CD8-positive, alpha-beta memory T cell (primary cell): ENCODE measurements at regions of chr6 and their contacts with region 1.

Region 1: GRCh38 chr6:26196846-26197648 is 109.8 kb downstream of the HFE start:
- DNase-seq: peak; percentile 66 to 93 (median 90)
- H3K4me3 ChIP-seq: peak overlapping the region; percentile 84
- H3K4me3 Mint-ChIP-seq: peak overlapping the region; percentile 95 to 99 (median 96)
- H3K27ac ChIP-seq: peak overlapping the region; percentile 95
- H3K27ac Mint-ChIP-seq: peak overlapping the region; percentile 95 to 100 (median 98)
- H3K4me1 ChIP-seq: peaks cover 17% of the 10 kb centered on the region
- H3K4me1 Mint-ChIP-seq: peaks cover 33 to 63% (median 59%) of the 10 kb centered on the region in 3 donors
- H3K27me3 ChIP-seq: no peaks in the 10 kb centered on the region
- H3K27me3 Mint-ChIP-seq: peaks cover 0 to 4% of the 10 kb centered on the region in 2 donors

Region 2: GRCh38 chr6:26025894-26026832 is 170.9 kb before region 1 on chr6:
- CTCF ChIA-PET with region 1: interaction called, 4 read pairs
- POLR2A ChIA-PET with region 1: interaction called, 10 read pairs
- DNase-seq: peak; percentile 86 to 95 (median 94)
- H3K4me3 ChIP-seq: peak overlapping the region; percentile 59
- H3K4me3 Mint-ChIP-seq: peak overlapping the region; percentile 85 to 95 (median 93)
- H3K27ac ChIP-seq: peak overlapping the region; percentile 86
- H3K27ac Mint-ChIP-seq: peak overlapping the region; percentile 93 to 100 (median 98)
- H3K4me1 ChIP-seq: peaks cover 21% of the 10 kb centered on the region
- H3K4me1 Mint-ChIP-seq: peaks cover 30 to 77% (median 55%) of the 10 kb centered on the region in 3 donors
- H3K27me3 ChIP-seq: no peaks in the 10 kb centered on the region
- H3K27me3 Mint-ChIP-seq: peaks cover 0 to 9% of the 10 kb centered on the region in 2 donors

Region 3: GRCh38 chr6:26103770-26104456 is 93.1 kb before region 1 on chr6:
- CTCF ChIA-PET with region 1: interaction called, 3 read pairs
- POLR2A ChIA-PET with region 1: interaction called, 32 read pairs
- DNase-seq: peak; percentile 75 to 96 (median 93)
- H3K4me3 ChIP-seq: peak overlapping the region; percentile 51
- H3K4me3 Mint-ChIP-seq: peak overlapping the region; percentile 83 to 92 (median 87)
- H3K27ac ChIP-seq: peak overlapping the region; percentile 82
- H3K27ac Mint-ChIP-seq: peak overlapping the region; percentile 96 to 98 (median 97)
- H3K4me1 ChIP-seq: peaks cover 18% of the 10 kb centered on the region
- H3K4me1 Mint-ChIP-seq: peaks cover 16 to 20% (median 17%) of the 10 kb centered on the region in 3 donors
- H3K27me3 ChIP-seq: no peaks in the 10 kb centered on the region
- H3K27me3 Mint-ChIP-seq: peaks cover 0 to 4% of the 10 kb centered on the region in 2 donors

Region 4: GRCh38 chr6:26223650-26224546 is 26.9 kb after region 1 on chr6:
- CTCF ChIA-PET with region 1: interaction called, 3 read pairs
- POLR2A ChIA-PET with region 1: interaction called, 35 read pairs
- DNase-seq: peak; percentile 57 to 83 (median 78)
- H3K4me3 ChIP-seq: peak overlapping the region; percentile 87
- H3K4me3 Mint-ChIP-seq: no peak overlapping the region
- H3K27ac ChIP-seq: peak overlapping the region; percentile 72
- H3K27ac Mint-ChIP-seq: no peak overlapping the region
- H3K4me1 ChIP-seq: peaks cover 17% of the 10 kb centered on the region
- H3K4me1 Mint-ChIP-seq: peaks cover under 1 to 7% (median 7%) of the 10 kb centered on the region in 3 donors
- H3K27me3 ChIP-seq: no peaks in the 10 kb centered on the region
- H3K27me3 Mint-ChIP-seq: no peaks in the 10 kb centered on the region

Region 5: DNA sequence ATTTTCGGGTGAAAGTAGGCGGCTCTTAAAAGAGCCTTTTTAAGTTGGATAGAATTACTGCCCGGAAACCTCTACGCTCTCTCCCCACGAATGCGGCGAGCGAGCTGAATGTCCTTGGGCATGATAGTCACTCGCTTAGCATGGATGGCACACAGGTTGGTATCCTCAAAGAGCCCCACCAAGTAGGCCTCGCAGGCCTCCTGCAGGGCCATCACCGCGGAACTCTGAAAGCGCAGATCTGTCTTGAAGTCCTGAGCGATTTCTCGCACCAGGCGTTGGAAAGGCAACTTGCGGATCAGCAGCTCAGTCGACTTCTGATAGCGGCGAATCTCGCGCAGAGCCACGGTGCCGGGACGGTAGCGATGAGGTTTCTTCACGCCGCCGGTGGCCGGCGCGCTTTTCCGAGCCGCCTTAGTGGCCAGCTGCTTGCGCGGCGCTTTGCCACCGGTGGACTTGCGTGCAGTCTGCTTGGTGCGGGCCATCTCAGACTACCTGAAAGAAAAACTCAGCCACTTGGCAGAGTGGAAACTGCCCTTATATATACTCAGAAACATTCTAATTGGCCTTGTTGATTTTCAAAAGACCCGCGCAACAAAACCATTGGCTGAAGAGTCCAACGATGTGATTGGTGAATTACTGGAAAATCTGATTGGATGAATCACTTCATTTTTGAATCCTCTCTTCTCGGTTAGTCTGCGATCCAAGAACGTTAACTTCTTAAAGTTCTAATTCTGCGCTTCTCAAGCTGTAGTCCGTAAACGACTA is 74.0 kb after region 1 on chr6:
- CTCF ChIA-PET with region 1: interaction called, 46 read pairs
- POLR2A ChIA-PET with region 1: interaction called, 173 read pairs
- DNase-seq: peak; percentile 61 to 84 (median 82)
- H3K4me3 ChIP-seq: peak overlapping the region; percentile 70
- H3K4me3 Mint-ChIP-seq: no peak overlapping the region
- H3K27ac ChIP-seq: peak overlapping the region; percentile 40
- H3K27ac Mint-ChIP-seq: peak overlapping the region in 5 of 8 donors; percentile 16 to 98 (median 41)
- H3K4me1 ChIP-seq: peaks cover 23% of the 10 kb centered on the region
- H3K4me1 Mint-ChIP-seq: peaks cover 19 to 29% (median 22%) of the 10 kb centered on the region in 3 donors
- H3K27me3 ChIP-seq: no peaks in the 10 kb centered on the region
- H3K27me3 Mint-ChIP-seq: peaks cover 0 to 10% of the 10 kb centered on the region in 2 donors

Region 6: GRCh38 chr6:26401987-26402658 is 205.1 kb after region 1 on chr6 and contains the start of gene BTN3A1:
- CTCF ChIA-PET with region 1: no interaction called
- POLR2A ChIA-PET with region 1: no interaction called
- DNase-seq: peak; percentile 60 to 82 (median 77)
- H3K4me3 ChIP-seq: peak within 1 kb of the TSS; percentile 95
- H3K4me3 Mint-ChIP-seq: peak within 1 kb of the TSS; percentile 94 to 100 (median 97)
- H3K27ac ChIP-seq: peak within 1 kb of the TSS; percentile 94
- H3K27ac Mint-ChIP-seq: peak within 1 kb of the TSS; percentile 97 to 100 (median 100)
- H3K4me1 ChIP-seq: peaks cover 46% of the 10 kb centered on the region
- H3K4me1 Mint-ChIP-seq: peaks cover 50 to 57% (median 51%) of the 10 kb centered on the region in 3 donors
- H3K27me3 ChIP-seq: no peaks in the 10 kb centered on the region
- H3K27me3 Mint-ChIP-seq: no peaks in the 10 kb centered on the region
- total RNA-seq, gene BTN3A1: 30.8 to 31.5 TPM

Region 7: DNA sequence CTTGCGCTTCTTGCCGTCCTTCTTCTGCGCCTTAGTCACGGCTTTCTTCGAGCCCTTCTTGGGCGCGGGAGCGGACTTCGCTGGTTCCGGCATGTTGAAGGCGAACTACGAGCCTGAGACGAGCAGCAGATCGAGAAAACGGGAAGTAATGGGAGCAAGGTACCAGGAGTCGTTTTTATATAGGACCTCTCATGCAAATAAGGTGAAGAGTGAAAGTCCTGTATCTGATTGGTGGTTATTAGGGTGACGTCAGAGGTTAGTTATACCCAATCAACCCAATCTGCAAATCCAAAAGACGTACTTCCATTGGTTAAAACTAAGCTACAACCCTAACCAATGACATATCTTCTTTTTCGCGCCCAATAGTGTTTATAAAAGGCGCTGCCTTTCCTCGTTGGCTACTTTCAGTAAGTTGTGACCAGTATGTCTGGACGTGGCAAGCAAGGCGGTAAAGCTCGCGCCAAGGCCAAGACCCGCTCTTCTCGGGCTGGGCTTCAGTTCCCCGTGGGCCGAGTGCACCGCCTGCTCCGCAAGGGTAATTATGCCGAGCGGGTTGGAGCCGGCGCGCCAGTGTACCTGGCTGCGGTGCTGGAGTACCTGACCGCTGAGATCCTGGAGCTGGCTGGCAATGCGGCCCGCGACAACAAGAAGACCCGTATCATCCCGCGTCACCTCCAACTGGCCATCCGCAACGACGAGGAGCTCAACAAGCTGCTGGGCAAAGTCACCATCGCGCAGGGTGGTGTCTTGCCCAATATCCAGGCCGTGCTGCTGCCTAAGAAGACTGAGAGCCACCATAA is 949.9 kb after region 1 on chr6:
- CTCF ChIA-PET with region 1: interaction called, 3 read pairs
- POLR2A ChIA-PET with region 1: interaction called, 10 read pairs
- DNase-seq: peak; percentile 42 to 93 (median 89)
- H3K4me3 ChIP-seq: peak overlapping the region; percentile 97
- H3K4me3 Mint-ChIP-seq: no peak overlapping the region
- H3K27ac ChIP-seq: peak overlapping the region; percentile 91
- H3K27ac Mint-ChIP-seq: no peak overlapping the region
- H3K4me1 ChIP-seq: peaks cover 20% of the 10 kb centered on the region
- H3K4me1 Mint-ChIP-seq: peaks cover 7 to 21% (median 10%) of the 10 kb centered on the region in 3 donors
- H3K27me3 ChIP-seq: no peaks in the 10 kb centered on the region
- H3K27me3 Mint-ChIP-seq: no peaks in the 10 kb centered on the region